BJ (cell line): ENCODE measurements at regions of chr2 and their contacts with region 1.

Region 1: DNA sequence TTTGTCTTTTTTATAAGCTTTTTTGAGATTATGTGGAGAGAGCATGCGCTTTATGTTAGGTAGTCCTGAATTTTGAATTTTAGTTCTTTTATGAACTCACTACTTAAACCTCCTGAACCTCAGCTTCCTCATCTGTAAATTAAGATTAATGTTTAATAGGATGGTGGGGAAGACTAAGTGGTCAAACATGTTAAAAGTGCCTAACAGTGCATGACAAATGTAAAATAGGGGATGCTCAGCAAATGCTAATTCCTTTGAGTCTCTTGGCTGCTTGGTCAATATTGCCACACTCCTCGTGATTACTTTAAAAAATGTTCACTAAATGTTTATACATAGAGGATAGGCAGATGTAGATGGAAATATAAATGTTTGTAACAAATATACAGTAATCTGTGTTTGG is 6.8 kb downstream of the BIRC6 start:
- DNase-seq: no peak
- H3K4me3 ChIP-seq: no peak overlapping the region
- H3K27me3 ChIP-seq: no peaks in the 10 kb centered on the region
- CTCF ChIP-seq: no peak

Region 2: GRCh38 chr2:32277674-32278482 is 85.7 kb before region 1 on chr2 and contains the start of gene YIPF4:
- CTCF ChIA-PET with region 1: no interaction called
- POLR2A ChIA-PET with region 1: interaction called, 10 read pairs
- DNase-seq: peak; percentile 72
- H3K4me3 ChIP-seq: peak within 1 kb of the TSS; percentile 99
- H3K27me3 ChIP-seq: no peaks in the 10 kb centered on the region; the same call in 1 of the 2 replicates
- CTCF ChIP-seq: no peak
- polyA plus RNA-seq, gene YIPF4: 5.3 and 15.6 TPM in 2 replicates